ENCODE measurements at regions of chr5 and their contacts with region 1.

Region 1: GRCh38 chr5:168987543-168988300 is 313.2 kb downstream of the SLIT3 start:
- DNase-seq: peak in 1 of 2 donors; percentile 30
- ATAC-seq: peak; percentile 55 to 56
- H3K4me3 ChIP-seq: no peak overlapping the region
- H3K27ac ChIP-seq: no peak overlapping the region
- H3K4me1 ChIP-seq: no peaks in the 10 kb centered on the region
- H3K27me3 ChIP-seq: no peaks in the 10 kb centered on the region
- CTCF ChIP-seq: peak; percentile 48 to 85 (median 71)
- POLR2A ChIP-seq: no peak

Region 2: GRCh38 chr5:169142264-169142970 is 154.7 kb after region 1 on chr5:
- in situ Hi-C with region 1: no loop called
- intact Hi-C with region 1: no loop called
- DNase-seq: peak; percentile 42 to 49
- ATAC-seq: peak; percentile 74 to 88
- H3K4me3 ChIP-seq: no peak overlapping the region
- H3K27ac ChIP-seq: peak overlapping the region in 2 of 4 donors; percentile 19 to 58
- H3K4me1 ChIP-seq: peaks cover 0 to 9% of the 10 kb centered on the region in 2 donors
- H3K27me3 ChIP-seq: no peaks in the 10 kb centered on the region
- CTCF ChIP-seq: no peak
- POLR2A ChIP-seq: no peak

Region 3: GRCh38 chr5:169197343-169197742 is 209.6 kb after region 1 on chr5:
- in situ Hi-C with region 1: loop called in 1 of 4 experiments (anchors 5 kb)
- intact Hi-C with region 1: loop called (anchors 5 kb)
- DNase-seq: no peak
- ATAC-seq: peak in 1 of 2 donors; percentile 42
- H3K4me3 ChIP-seq: no peak overlapping the region
- H3K27ac ChIP-seq: no peak overlapping the region
- H3K4me1 ChIP-seq: no peaks in the 10 kb centered on the region
- H3K27me3 ChIP-seq: no peaks in the 10 kb centered on the region
- CTCF ChIP-seq: peak in 1 of 5 experiments; percentile 35
- POLR2A ChIP-seq: no peak

Region 4: DNA sequence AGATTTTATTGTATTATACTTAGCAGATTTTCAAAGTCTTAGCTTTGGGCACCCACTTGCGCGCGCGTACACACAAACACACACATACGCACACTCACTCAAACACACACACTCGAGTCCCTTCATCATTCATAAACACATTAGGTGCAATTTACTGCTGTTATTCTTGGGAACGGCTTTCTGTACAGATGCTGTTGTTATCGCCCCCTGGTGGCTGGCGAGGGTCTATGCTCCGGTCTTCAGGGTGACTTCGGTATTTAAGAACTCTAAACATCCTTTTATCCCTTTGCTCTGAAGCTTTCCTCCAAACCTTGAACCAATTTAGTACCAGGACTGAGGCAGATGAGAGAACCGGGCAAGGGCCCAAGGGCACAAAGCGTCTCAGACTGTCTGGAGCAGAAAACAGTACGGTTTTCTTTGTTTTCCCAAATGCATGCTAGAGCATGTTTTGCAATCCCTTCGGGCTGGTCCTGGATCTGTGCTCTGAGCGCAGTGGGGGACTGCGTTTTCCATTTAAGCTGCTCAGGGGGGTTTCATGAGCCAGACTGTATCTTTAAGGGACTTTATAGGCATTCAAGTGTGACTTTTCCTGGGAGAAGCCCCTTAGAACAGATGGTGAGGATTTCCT is 314.9 kb after region 1 on chr5:
- in situ Hi-C with region 1: loop called (anchors 5 to 10 kb)
- intact Hi-C with region 1: loop called (anchors 1 kb)
- DNase-seq: peak; percentile 25 to 47
- ATAC-seq: peak in 1 of 2 donors; percentile 42
- H3K4me3 ChIP-seq: no peak overlapping the region
- H3K27ac ChIP-seq: no peak overlapping the region
- H3K4me1 ChIP-seq: peaks cover 0 to 6% of the 10 kb centered on the region in 2 donors
- H3K27me3 ChIP-seq: peaks cover 0 to 14% (median 4%) of the 10 kb centered on the region in 3 donors
- CTCF ChIP-seq: peak; percentile 53 to 85 (median 61)
- POLR2A ChIP-seq: no peak

Region 5: DNA sequence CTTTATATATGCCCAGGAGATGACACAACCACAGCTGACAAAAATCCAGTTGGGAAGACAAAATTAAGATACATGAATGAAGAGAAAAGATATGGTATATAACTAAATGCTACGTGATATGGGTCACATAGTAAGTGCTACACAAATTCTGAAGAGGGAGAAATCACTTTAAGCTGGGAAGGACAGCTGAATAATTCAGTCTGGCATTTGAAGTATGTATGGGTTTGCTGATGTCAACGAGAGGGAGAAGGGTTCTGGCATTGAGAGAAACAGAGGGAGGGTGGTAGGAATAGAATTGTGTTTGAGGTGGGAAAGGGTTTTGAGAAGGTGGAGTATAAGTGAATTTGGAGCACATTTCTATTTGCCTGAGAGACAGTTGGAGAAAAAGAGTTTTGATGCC is 319.9 kb after region 1 on chr5:
- in situ Hi-C with region 1: loop called (anchors 5 to 10 kb)
- intact Hi-C with region 1: loop called (anchors 1 kb)
- DNase-seq: no peak
- ATAC-seq: no peak
- H3K4me3 ChIP-seq: no peak overlapping the region
- H3K27ac ChIP-seq: no peak overlapping the region
- H3K4me1 ChIP-seq: no peaks in the 10 kb centered on the region
- H3K27me3 ChIP-seq: peaks cover 0 to 13% (median 0%) of the 10 kb centered on the region in 3 donors
- CTCF ChIP-seq: no peak
- POLR2A ChIP-seq: no peak

Region 6: DNA sequence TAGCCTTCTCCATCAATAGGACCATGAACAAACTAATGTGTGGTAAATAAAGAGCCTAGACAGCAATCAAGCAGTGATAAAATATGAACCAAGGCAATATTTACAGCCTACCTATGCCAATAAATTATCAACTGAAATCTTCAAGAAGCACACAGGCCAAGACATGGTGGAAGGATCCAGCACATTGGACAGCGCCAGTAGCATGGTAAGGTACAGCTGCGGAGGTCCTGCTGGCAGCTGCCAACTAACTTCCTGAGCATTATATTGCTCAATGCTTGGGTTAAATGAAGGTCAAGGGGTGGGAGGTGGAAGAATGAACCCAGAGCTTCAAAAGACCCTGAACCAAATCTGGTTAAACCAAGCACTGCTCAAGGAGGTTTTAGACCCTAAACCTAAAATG is 579.4 kb after region 1 on chr5:
- in situ Hi-C with region 1: loop called in 1 of 4 experiments (anchors 25 kb)
- intact Hi-C with region 1: no loop called
- DNase-seq: no peak
- ATAC-seq: no peak
- H3K4me3 ChIP-seq: no peak overlapping the region
- H3K27ac ChIP-seq: no peak overlapping the region
- H3K4me1 ChIP-seq: no peaks in the 10 kb centered on the region
- H3K27me3 ChIP-seq: peaks cover 0 to 4% (median 0%) of the 10 kb centered on the region in 3 donors
- CTCF ChIP-seq: no peak
- POLR2A ChIP-seq: no peak

Region 7: DNA sequence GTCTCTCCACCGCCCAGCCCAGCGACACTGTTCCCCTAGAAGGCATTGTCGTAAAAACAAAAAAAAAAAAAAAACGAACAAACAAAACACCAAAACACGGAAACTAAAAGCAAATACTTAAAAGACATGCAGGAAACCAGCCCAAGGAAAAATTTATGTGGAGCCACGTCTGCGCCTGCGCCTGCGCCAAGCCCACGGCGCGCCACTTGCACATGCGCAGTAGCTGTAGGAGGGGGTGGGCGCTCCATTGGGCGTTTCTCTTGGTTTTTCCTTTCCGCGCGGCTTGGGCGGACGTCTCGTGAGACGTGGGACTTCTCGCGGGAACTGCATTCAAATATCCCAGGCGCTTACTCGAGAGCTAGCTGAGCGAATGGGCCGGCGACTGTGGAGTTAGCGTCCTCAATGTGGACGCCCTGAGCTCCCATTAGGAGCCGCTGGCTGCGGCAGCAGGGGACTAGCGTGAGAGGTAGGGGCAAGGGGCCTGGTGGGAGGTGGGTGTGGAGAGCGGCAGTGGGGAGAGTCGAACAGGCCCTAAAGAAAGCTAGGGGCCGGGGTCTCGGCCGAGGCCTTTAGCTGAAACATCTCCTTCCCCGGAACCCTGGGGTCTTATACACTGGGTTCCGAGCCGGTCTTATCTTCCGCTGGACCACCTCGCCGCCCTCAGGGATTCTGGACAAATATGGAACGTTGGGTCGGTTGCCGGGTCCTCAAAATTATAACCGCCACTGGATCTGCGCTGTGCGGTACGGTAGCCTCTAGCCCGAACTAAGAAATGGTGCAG is 595.9 kb after region 1 on chr5 and contains the start of gene SPDL1:
- in situ Hi-C with region 1: loop called in 2 of 4 experiments (anchors 25 kb)
- intact Hi-C with region 1: loop called (anchors 5 kb)
- DNase-seq: peak; percentile 86 to 91
- ATAC-seq: peak; percentile 95 to 98
- H3K4me3 ChIP-seq: peak within 1 kb of the TSS; percentile 63 to 98 (median 91)
- H3K27ac ChIP-seq: peak within 1 kb of the TSS; percentile 70 to 82 (median 78)
- H3K4me1 ChIP-seq: peaks cover 0 to 4% of the 10 kb centered on the region in 2 donors
- H3K27me3 ChIP-seq: no peaks in the 10 kb centered on the region
- CTCF ChIP-seq: no peak
- POLR2A ChIP-seq: peak in 1 of 2 donors; percentile 61
- total RNA-seq, gene SPDL1: 0.78 to 4.6 (median 3.2) TPM

Measured in gastrocnemius medialis (tissue), 4 donors.